A673 (cell line): ENCODE measurements at regions of chr14 and their contacts with region 1.

Region 1: DNA sequence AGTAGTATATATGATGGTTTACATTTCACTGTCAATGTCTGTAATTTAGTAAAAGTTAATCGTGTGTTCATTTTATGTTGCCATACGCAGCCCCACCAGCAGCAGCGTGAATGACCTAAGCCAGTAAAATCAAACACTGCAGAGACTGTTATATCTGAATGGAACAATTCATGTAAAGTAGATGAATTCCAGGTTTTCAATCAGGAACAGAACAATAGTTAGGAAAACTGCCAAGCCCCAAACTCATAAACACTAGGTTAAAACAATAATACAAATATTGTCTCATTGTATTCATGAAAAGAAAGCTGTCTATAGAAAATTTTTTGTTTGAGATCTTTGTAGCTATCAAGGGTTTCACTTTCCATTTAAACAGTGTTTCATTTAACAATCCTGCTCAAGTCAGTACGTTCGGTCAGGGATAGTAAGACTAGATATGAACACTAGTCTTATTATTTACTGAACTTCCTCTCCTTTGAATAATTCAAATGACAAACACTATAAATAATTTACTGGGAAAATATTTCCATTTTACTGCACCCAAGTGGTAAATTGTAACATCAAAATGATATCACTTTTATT is 256.8 kb upstream of the FLRT2 start:
- DNase-seq: no peak
- H3K4me3 ChIP-seq: no peak overlapping the region
- H3K27ac ChIP-seq: no peak overlapping the region
- H3K4me1 ChIP-seq: no peaks in the 10 kb centered on the region
- H3K27me3 ChIP-seq: no peaks in the 10 kb centered on the region
- CTCF ChIP-seq: no peak

Region 2: GRCh38 chr14:85319998-85320630 is 46.9 kb after region 1 on chr14:
- CTCF ChIA-PET with region 1: no interaction called
- POLR2A ChIA-PET with region 1: no interaction called
- intact Hi-C with region 1: no loop called
- DNase-seq: peak; percentile 72
- H3K4me3 ChIP-seq: no peak overlapping the region
- H3K27ac ChIP-seq: no peak overlapping the region
- H3K4me1 ChIP-seq: peaks cover 19% of the 10 kb centered on the region
- H3K27me3 ChIP-seq: no peaks in the 10 kb centered on the region
- CTCF ChIP-seq: no peak

Region 3: GRCh38 chr14:85342858-85343607 is 69.8 kb after region 1 on chr14:
- CTCF ChIA-PET with region 1: no interaction called
- POLR2A ChIA-PET with region 1: no interaction called
- intact Hi-C with region 1: no loop called
- DNase-seq: no peak
- H3K4me3 ChIP-seq: no peak overlapping the region
- H3K27ac ChIP-seq: no peak overlapping the region
- H3K4me1 ChIP-seq: no peaks in the 10 kb centered on the region
- H3K27me3 ChIP-seq: no peaks in the 10 kb centered on the region
- CTCF ChIP-seq: no peak

Region 4: DNA sequence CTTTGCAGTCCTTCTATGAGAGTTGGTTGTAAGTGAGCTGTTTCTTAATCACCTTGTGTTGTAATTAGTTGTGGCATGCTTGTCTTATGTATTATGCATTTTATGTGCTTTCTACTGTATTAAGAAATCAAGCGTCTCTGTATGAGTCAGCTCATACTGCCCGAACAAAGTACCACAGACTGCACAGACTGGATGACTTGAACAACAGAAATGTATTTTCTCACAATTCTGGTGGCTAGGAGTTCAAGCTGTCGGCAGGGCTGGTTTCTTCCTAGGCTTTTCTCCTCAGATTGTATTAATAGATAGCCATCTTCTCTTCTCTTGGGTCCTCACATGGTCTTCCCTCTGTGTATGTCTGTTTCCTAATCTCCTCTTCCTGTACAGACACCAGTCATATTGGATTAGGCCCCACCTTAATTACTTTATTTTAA is 334.5 kb after region 1 on chr14:
- CTCF ChIA-PET with region 1: interaction called, 10 read pairs
- POLR2A ChIA-PET with region 1: no interaction called
- intact Hi-C with region 1: no loop called
- DNase-seq: peak; percentile 65
- H3K4me3 ChIP-seq: no peak overlapping the region
- H3K27ac ChIP-seq: peak overlapping the region; percentile 33
- H3K4me1 ChIP-seq: peaks cover 54% of the 10 kb centered on the region
- H3K27me3 ChIP-seq: no peaks in the 10 kb centered on the region
- CTCF ChIP-seq: no peak